ENCODE measurements at regions of chr22 and their contacts with region 1.

Region 1: GRCh38 chr22:36856121-36856791 is 4.5 kb upstream of the NCF4 start:
- DNase-seq: peak; percentile 81 to 98 (median 94)

Region 2: DNA sequence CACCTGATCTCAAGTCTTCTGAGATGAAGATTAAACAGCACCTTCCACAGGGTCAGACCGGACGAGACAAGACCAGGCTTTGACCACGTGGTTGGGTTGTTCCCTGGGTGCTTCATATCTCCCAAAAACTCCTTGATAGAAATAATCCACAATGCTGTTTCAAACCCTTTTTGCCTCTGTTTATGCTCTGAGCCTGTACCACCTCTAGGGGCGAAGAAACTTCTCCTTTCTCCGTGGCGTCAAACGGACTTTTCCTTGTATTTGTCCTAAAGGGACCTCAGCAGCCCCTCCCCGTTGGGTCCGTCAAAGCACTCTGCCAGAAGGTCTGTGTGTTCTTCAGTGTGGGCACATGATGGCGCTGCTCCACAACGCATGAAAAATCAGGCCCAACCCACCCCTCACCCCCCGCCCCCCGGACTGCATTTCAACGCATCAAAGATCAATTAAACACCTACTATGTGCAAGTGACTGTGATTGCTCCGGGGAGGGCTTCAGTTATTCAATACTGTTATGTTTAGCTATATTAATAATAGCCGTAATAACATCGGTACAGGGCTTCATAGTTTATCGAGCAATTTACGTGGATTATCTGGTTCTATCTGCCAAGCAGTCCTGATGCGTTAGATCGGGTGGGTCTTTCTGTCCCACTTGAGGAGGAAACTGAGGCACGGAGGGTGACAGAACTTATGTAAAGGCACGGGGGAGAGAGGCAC is 310.0 kb before region 1 on chr22:
- intact Hi-C with region 1: loop called (anchors 10 kb)
- DNase-seq: peak; percentile 29 to 78 (median 58)

Region 3: GRCh38 chr22:36781656-36782627 is 74.3 kb before region 1 on chr22:
- intact Hi-C with region 1: loop called (anchors 10 kb)
- DNase-seq: peak; percentile 57 to 93 (median 82)

Region 4: GRCh38 chr22:36977947-36978660 is 121.8 kb after region 1 on chr22:
- intact Hi-C with region 1: loop called (anchors 5 kb)
- DNase-seq: peak; percentile 84 to 96 (median 93)